ENCODE measurements at regions of chr15 and their contacts with region 1.

Region 1: DNA sequence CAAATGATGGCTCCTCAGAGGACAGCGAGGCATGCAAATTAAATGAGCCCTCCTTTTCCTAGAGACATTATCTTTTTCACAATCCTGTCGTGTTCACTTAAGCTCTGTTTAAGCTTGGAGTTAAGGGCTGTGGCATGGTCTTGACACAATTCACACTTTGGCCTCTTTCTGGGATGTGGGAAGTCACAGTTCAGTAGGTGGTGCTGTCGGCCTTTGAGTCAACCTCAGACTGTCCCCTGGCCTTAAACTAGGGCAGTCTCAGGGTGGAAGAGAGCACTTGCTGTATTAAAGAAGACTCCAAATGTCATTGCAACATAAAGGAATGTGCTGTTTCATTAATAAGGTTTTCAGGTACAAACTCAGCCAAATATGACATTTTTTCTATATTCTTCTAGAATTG is 351.0 kb downstream of the MCTP2 start:
- DNase-seq: peak; percentile 66
- H3K4me3 Mint-ChIP-seq: no peak overlapping the region
- H3K27ac Mint-ChIP-seq: no peak overlapping the region
- H3K4me1 Mint-ChIP-seq: peaks cover 31% of the 10 kb centered on the region
- H3K27me3 Mint-ChIP-seq: peaks cover 71% of the 10 kb centered on the region

Region 2: GRCh38 chr15:94306700-94307650 is 275.4 kb before region 1 on chr15:
- CTCF ChIA-PET with region 1: no interaction called
- intact Hi-C with region 1: loop called (anchors 10 kb)
- DNase-seq: peak; percentile 49
- H3K4me3 Mint-ChIP-seq: no peak overlapping the region
- H3K27ac Mint-ChIP-seq: peak overlapping the region; percentile 87
- H3K4me1 Mint-ChIP-seq: peaks cover 44% of the 10 kb centered on the region
- H3K27me3 Mint-ChIP-seq: no peaks in the 10 kb centered on the region

Region 3: GRCh38 chr15:94610069-94610468 is 27.7 kb after region 1 on chr15:
- CTCF ChIA-PET with region 1: no interaction called
- intact Hi-C with region 1: loop called (anchors 1 kb)
- DNase-seq: peak; percentile 27
- H3K4me3 Mint-ChIP-seq: no peak overlapping the region
- H3K27ac Mint-ChIP-seq: no peak overlapping the region
- H3K4me1 Mint-ChIP-seq: peaks cover 8% of the 10 kb centered on the region
- H3K27me3 Mint-ChIP-seq: peaks cover 52% of the 10 kb centered on the region

Region 4: GRCh38 chr15:95025924-95026728 is 443.8 kb after region 1 on chr15:
- CTCF ChIA-PET with region 1: no interaction called
- intact Hi-C with region 1: loop called (anchors 10 kb)
- DNase-seq: peak; percentile 43
- H3K4me3 Mint-ChIP-seq: no peak overlapping the region
- H3K27ac Mint-ChIP-seq: no peak overlapping the region
- H3K4me1 Mint-ChIP-seq: no peaks in the 10 kb centered on the region
- H3K27me3 Mint-ChIP-seq: peaks cover 6% of the 10 kb centered on the region

Region 5: DNA sequence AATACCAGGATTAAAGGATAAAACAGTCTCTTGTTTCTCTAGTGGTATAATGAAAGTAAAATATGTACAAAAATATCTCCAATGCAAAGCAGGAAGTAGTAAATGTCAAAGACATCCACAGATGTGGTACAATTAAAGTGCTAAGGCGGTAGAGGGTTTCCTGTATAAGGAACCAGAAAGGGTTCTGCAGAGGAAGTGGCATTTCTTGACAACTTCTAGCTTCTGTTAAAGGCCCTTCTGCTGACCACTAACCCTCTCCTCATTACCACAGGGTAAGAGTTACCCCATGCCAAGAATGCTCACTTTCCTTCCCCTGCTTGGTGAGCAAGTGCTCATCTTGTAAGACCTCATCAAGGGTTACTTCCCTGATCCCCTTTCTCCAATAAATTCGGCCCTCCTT is 864.5 kb after region 1 on chr15:
- CTCF ChIA-PET with region 1: no interaction called
- intact Hi-C with region 1: loop called (anchors 2 kb)
- DNase-seq: peak; percentile 8
- H3K4me3 Mint-ChIP-seq: no peak overlapping the region
- H3K27ac Mint-ChIP-seq: no peak overlapping the region
- H3K4me1 Mint-ChIP-seq: peaks cover 21% of the 10 kb centered on the region
- H3K27me3 Mint-ChIP-seq: peaks cover 3% of the 10 kb centered on the region